GM13977 (cell line): ENCODE measurements at regions of chr1 and their contacts with region 1.

Region 1: GRCh38 chr1:100921109-100921706 is 25.3 kb downstream of the SLC30A7 start:
- DNase-seq: no peak
- CTCF ChIP-seq: peak; percentile 63

Region 2: GRCh38 chr1:100239961-100240360 is 681.2 kb before region 1 on chr1:
- in situ Hi-C with region 1: no loop called
- DNase-seq: no peak
- CTCF ChIP-seq: no peak

Region 3: DNA sequence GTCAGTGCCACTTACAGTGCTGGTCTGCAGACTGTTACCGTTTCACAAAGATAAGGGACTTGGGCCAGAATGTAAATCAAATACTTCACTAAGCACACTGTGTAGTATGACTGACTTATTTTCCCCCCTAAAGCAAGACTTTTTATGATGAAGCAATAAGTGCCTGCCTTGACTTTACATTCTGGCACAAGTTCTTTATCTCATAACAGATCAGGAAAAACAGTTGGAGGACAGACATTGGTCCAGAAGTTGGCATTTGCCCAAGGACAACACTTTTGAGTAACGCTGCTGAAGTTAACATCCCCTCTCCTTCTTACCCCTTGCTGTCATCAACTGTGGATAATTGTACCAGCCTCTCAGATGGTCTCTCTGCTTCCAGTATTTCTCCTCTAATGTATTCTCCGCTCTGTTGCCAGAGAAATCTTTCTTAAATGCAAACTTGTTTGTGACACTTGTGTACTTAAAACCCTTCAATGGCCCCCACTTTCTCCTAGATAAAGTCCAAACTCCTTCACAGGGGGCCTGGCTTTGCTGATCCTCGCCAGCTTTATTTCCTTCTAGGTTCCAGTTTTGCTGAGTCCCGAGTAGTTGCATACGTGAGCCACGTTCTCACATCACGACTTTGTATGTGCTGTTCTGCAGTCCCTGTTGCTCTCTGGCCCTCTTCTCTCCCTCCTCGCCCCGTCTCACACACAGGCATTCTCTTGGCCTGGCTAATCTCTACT is 361.3 kb after region 1 on chr1:
- in situ Hi-C with region 1: loop called (anchors 5 kb)
- DNase-seq: no peak
- CTCF ChIP-seq: no peak

Region 4: GRCh38 chr1:101438359-101438758 is 517.2 kb after region 1 on chr1:
- in situ Hi-C with region 1: loop called (anchors 25 kb)
- DNase-seq: no peak
- CTCF ChIP-seq: peak; percentile 68